SK-N-SH (cell line): ENCODE measurements at regions of chr6 and their contacts with region 1.

Region 1: GRCh38 chr6:155314773-155315515 is 660 bp upstream of the TFB1M start:
- DNase-seq: peak; percentile 46
- H3K4me3 ChIP-seq: peak overlapping the region; percentile 95 to 99
- H3K27ac ChIP-seq: peak overlapping the region; percentile 83 to 97
- H3K4me1 ChIP-seq: peaks cover 15 to 22% of the 10 kb centered on the region in 2 experiments
- H3K27me3 ChIP-seq: no peaks in the 10 kb centered on the region
- CTCF ChIP-seq: no peak
- EP300 ChIP-seq: peak in 1 of 2 experiments; percentile 38; a peak in 1 of 4 replicates
- RAD21 ChIP-seq: no peak

Region 2: DNA sequence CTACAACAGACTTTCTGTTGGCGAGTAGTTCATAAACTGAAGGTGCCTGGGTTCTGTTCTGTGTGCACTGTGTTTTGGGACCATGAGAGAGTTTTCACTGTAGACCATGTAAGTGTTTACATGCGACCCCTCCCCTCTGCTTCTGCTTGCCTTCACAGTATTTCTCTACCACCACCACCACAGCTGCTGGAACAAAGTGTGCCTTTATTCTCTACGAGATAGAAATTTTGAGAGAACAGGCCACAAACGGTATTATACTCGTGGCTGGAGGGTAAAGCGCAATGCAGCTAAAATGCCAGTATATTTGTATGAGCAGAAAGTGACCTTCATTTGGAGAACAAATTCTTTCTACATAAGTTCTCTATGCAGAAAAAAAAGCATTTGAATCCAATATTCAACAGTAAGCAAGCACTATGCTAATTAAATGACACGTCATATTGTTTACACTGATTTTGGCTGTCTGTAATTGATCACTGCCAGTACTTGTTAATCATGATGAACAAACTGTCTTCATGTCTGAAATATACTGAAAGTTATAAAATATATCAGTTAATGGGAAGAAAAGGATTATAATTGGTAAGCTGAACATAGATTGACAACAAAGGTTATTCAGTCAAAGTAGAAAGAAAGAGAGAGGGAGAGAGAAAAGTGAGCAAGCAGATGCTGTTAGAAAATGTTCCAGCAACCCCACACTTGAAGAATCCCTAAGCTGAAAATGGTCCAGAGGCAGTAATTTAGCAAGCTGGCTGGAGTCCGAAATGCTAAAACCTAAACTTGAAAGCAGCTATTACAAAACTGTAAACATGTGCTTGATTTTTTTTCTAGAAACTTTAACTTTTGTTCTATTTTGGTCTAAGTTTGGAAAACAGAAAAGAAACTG is 42.4 kb before region 1 on chr6:
- CTCF ChIA-PET with region 1: interaction called, 15 read pairs
- POLR2A ChIA-PET with region 1: interaction called, 3 read pairs
- DNase-seq: no peak
- H3K4me3 ChIP-seq: no peak overlapping the region
- H3K27ac ChIP-seq: peak overlapping the region; percentile 93 to 98
- H3K4me1 ChIP-seq: peaks cover 38 to 79% of the 10 kb centered on the region in 2 experiments
- H3K27me3 ChIP-seq: no peaks in the 10 kb centered on the region
- CTCF ChIP-seq: no peak
- EP300 ChIP-seq: no peak
- RAD21 ChIP-seq: no peak

Region 3: DNA sequence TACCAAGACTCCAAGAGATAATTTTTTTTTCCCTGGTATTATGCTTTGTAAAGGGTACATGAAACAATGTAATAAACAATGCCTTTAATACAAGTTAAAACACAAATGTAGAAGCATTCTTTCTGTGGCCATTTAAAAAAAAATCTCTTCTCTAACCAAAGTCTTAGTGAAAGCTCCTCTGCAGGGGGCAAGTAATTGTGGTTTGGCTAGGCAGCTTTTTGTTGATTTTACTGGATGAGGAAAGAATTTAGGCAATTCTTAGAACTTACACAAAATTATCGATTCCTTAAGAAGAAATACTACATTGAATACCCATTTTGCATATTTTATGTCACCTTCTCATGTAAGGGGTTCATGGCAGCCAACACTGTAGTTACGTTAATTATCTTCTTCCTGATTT is 13.1 kb before region 1 on chr6:
- CTCF ChIA-PET with region 1: interaction called, 14 read pairs
- POLR2A ChIA-PET with region 1: interaction called, 3 read pairs
- DNase-seq: no peak
- H3K4me3 ChIP-seq: no peak overlapping the region
- H3K27ac ChIP-seq: no peak overlapping the region
- H3K4me1 ChIP-seq: peaks cover 0 to 7% of the 10 kb centered on the region in 2 experiments; a peak in 3 of 4 replicates
- H3K27me3 ChIP-seq: no peaks in the 10 kb centered on the region
- CTCF ChIP-seq: no peak
- EP300 ChIP-seq: no peak
- RAD21 ChIP-seq: no peak